Caco-2 (cell line): ENCODE measurements at regions of chr5 and their contacts with region 1.

Region 1: GRCh38 chr5:114449860-114450421 is 88.1 kb downstream of the KCNN2 start:
- DNase-seq: peak; percentile 53 to 61
- H3K4me3 ChIP-seq: no peak overlapping the region
- H3K4me3 Mint-ChIP-seq: no peak overlapping the region
- H3K27ac Mint-ChIP-seq: no peak overlapping the region
- H3K4me1 ChIP-seq: no peaks in the 10 kb centered on the region
- H3K4me1 Mint-ChIP-seq: no peaks in the 10 kb centered on the region
- H3K27me3 ChIP-seq: no peaks in the 10 kb centered on the region
- H3K27me3 Mint-ChIP-seq: peaks cover 35% of the 10 kb centered on the region
- CTCF ChIP-seq: peak; percentile 77 to 83

Region 2: GRCh38 chr5:113678924-113679575 is 770.9 kb before region 1 on chr5:
- CTCF ChIA-PET with region 1: no interaction called
- POLR2A ChIA-PET with region 1: no interaction called
- intact Hi-C with region 1: loop called (anchors 1 kb)
- DNase-seq: peak in 1 of 2 experiments; percentile 46
- H3K4me3 ChIP-seq: no peak overlapping the region
- H3K4me3 Mint-ChIP-seq: no peak overlapping the region
- H3K27ac Mint-ChIP-seq: no peak overlapping the region
- H3K4me1 ChIP-seq: no peaks in the 10 kb centered on the region
- H3K4me1 Mint-ChIP-seq: no peaks in the 10 kb centered on the region
- H3K27me3 ChIP-seq: no peaks in the 10 kb centered on the region
- H3K27me3 Mint-ChIP-seq: peaks cover 3% of the 10 kb centered on the region
- CTCF ChIP-seq: peak; percentile 62 to 73

Region 3: DNA sequence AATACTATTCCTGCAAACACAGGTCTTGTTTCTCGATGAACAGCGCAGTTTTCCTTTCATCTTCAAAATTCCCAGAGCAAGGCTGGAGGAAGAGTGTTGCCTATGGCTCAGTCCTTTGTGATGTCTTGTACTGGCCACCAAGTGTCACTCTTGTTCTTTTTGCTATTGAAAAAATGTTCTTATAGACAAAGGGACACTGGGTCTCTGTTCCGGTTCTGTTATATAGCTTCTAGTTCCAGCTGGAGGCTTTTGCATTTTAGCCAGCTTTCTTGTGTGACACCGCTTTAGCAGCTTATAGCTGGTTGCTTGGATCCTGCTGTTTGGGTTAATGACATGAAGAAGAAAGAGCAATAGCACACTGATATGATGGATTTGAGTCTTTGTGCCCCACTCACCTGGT is 431.8 kb before region 1 on chr5:
- CTCF ChIA-PET with region 1: no interaction called
- POLR2A ChIA-PET with region 1: no interaction called
- intact Hi-C with region 1: loop called (anchors 1 kb)
- DNase-seq: peak in 1 of 2 experiments; percentile 3
- H3K4me3 ChIP-seq: no peak overlapping the region
- H3K4me3 Mint-ChIP-seq: no peak overlapping the region
- H3K27ac Mint-ChIP-seq: no peak overlapping the region
- H3K4me1 ChIP-seq: no peaks in the 10 kb centered on the region
- H3K4me1 Mint-ChIP-seq: no peaks in the 10 kb centered on the region
- H3K27me3 ChIP-seq: no peaks in the 10 kb centered on the region
- H3K27me3 Mint-ChIP-seq: peaks cover 5% of the 10 kb centered on the region
- CTCF ChIP-seq: peak in 1 of 2 experiments; percentile 16

Region 4: GRCh38 chr5:114101153-114101552 is 348.8 kb before region 1 on chr5:
- CTCF ChIA-PET with region 1: no interaction called
- POLR2A ChIA-PET with region 1: no interaction called
- intact Hi-C with region 1: loop called (anchors 1 kb)
- DNase-seq: peak in 1 of 2 experiments; percentile 30
- H3K4me3 ChIP-seq: no peak overlapping the region
- H3K4me3 Mint-ChIP-seq: no peak overlapping the region
- H3K27ac Mint-ChIP-seq: no peak overlapping the region
- H3K4me1 ChIP-seq: no peaks in the 10 kb centered on the region
- H3K4me1 Mint-ChIP-seq: no peaks in the 10 kb centered on the region
- H3K27me3 ChIP-seq: no peaks in the 10 kb centered on the region
- H3K27me3 Mint-ChIP-seq: peaks cover 8% of the 10 kb centered on the region
- CTCF ChIP-seq: peak; percentile 41 to 42

Region 5: DNA sequence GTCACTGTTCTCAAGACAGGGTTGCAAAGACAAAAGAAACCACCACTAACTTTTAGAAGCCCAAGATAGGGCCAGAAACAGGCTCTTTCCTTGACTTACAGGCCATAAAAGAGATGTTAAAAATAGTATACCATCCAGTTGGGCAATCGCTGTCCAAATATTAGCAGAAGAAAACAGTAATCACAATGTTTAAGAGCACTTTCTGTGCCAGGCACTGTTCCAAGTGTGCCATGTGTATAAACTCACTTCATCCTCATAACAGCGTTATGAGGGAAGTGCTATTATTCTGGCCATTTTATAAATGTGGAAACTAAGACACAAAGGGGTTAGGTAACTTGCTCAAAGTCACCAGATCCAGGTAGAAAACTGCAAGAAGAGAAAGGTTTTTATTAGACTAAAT is 23.6 kb after region 1 on chr5:
- CTCF ChIA-PET with region 1: no interaction called
- POLR2A ChIA-PET with region 1: no interaction called
- intact Hi-C with region 1: no loop called
- DNase-seq: no peak
- H3K4me3 ChIP-seq: no peak overlapping the region
- H3K4me3 Mint-ChIP-seq: no peak overlapping the region
- H3K27ac Mint-ChIP-seq: no peak overlapping the region
- H3K4me1 ChIP-seq: no peaks in the 10 kb centered on the region
- H3K4me1 Mint-ChIP-seq: no peaks in the 10 kb centered on the region
- H3K27me3 ChIP-seq: no peaks in the 10 kb centered on the region
- H3K27me3 Mint-ChIP-seq: no peaks in the 10 kb centered on the region
- CTCF ChIP-seq: no peak

Region 6: DNA sequence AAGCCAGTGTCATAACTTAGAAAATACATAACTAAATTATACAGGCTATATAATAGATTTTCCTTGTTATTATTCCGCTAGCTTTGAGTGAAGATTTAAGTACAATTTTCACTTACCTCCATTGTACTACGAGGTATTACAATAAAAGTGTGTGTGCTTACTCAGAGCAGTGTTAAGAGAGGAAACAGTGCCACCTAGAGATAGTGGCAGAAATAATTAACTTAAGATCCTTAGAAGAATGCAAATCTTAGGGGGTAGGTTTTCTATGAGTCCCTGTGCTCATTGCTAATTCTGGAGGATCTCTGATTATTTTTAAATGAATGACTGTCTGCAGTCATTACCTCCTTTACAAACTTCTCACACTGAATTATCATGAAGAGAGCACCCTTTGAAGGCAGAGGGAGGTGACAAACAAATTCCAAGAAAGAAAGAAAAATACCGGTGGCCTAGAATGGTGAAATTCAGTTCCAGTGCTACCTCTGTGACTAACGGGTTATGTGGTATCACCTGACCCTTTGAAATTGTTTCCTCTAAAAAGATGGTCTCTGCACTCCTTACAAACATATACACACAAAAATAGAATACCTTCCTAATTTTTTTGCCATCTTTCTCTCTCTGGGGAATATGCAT is 339.9 kb after region 1 on chr5:
- CTCF ChIA-PET with region 1: no interaction called
- POLR2A ChIA-PET with region 1: no interaction called
- intact Hi-C with region 1: loop called (anchors 5 kb)
- DNase-seq: peak in 1 of 2 experiments; percentile 20
- H3K4me3 ChIP-seq: no peak overlapping the region
- H3K4me3 Mint-ChIP-seq: no peak overlapping the region
- H3K27ac Mint-ChIP-seq: no peak overlapping the region
- H3K4me1 ChIP-seq: peaks cover 4% of the 10 kb centered on the region; the same call in 1 of the 2 replicates
- H3K4me1 Mint-ChIP-seq: peaks cover 7% of the 10 kb centered on the region
- H3K27me3 ChIP-seq: no peaks in the 10 kb centered on the region
- H3K27me3 Mint-ChIP-seq: peaks cover 3% of the 10 kb centered on the region
- CTCF ChIP-seq: peak in 1 of 2 experiments; percentile 57